ENCODE measurements at regions of chr18 and their contacts with region 1.

Region 1: DNA sequence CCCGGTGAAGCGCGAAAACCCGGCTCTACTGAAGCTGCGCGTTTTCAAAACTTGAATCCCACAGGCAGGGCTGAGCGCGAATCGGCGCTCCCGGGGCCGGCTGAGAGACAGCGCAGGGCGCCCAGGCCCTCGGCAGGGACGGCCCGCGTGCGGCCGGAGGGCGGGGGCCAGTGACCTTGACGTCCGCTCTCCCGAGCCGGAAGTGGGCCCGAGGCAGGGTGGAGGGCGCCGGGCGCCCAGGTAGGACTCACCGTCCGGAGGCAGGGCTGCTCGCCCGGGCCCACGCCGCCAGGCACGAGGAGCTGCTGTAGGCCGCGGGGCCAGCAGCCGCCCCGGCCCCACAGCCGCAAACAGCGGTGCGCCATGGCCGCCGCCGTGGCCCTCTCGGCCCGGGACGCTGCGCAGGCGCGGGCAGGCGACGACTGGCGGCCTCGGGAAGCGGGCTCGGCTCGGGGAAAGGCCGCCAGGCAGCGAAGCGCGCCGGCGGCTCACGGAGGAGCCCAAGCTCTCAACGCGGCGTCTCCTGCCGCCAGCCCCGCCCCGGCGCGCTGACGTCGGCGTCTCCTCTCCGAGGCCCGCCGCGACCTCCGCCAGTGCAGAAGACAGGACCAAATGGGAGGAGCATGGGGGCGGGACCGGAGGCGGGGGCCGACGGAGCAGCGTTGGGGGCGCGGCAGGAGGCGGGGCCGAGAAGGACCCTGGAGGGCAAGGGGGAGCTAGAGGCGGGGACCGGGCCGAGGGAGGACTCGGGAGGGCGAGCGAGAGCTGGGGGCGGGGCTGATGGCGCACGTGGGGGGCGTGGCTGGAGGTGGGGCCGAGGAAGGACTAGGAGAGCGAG is at the start of gene AFG3L2:
- DNase-seq: peak; percentile 98 to 100 (median 100)

Region 2: GRCh38 chr18:12637901-12638633 is 261.1 kb after region 1 on chr18:
- intact Hi-C with region 1: no loop called
- DNase-seq: no peak

Region 3: DNA sequence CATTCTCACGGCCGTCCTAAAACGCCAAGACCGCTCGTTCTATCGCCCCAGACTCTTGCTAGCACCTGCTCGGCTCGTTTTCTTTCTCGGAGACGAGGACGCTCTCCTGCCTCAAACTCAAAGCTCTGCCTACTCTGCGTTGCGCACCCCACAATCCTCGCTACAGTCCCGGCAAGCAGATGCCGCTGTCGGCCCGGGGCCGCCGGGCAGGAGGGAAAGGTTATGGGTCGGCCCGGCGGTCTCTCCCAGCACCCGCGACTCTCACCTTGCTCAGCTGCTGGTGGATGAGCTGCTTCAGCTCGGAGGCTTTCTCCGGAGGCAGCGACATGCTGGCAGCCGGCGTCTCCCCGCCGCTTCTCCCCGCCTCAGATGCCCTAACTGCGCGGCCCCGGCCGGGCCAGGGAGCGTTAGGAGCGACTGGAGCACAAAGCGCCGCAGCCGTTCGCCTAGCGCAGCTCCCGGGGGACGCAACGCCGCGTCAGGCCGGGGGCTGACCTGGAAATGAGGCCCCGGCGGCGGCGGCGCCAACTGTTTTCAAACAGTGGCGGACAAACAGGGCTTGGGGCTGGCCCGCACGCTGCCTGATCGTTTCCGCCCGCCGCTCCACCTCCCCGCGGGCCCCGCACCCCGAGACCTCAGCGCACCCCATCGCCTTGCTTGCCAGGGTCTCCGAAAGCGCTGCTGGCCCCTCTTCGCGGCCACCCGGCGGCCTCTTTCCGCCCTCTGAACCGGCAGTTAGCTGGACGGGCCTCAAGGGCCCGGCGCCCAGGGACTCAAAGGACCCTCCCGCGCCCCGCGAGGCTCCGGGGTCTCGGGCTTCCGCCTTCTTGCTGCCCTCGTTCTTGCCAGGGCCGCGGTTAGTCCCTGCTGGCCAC is 325.5 kb after region 1 on chr18 and contains the starts of genes CEP76 and PSMG2:
- intact Hi-C with region 1: loop called (anchors 5 kb)
- DNase-seq: peak; percentile 70 to 95 (median 88)